H1 (cell line): ENCODE measurements at regions of chr5 and their contacts with region 1.

Region 1: DNA sequence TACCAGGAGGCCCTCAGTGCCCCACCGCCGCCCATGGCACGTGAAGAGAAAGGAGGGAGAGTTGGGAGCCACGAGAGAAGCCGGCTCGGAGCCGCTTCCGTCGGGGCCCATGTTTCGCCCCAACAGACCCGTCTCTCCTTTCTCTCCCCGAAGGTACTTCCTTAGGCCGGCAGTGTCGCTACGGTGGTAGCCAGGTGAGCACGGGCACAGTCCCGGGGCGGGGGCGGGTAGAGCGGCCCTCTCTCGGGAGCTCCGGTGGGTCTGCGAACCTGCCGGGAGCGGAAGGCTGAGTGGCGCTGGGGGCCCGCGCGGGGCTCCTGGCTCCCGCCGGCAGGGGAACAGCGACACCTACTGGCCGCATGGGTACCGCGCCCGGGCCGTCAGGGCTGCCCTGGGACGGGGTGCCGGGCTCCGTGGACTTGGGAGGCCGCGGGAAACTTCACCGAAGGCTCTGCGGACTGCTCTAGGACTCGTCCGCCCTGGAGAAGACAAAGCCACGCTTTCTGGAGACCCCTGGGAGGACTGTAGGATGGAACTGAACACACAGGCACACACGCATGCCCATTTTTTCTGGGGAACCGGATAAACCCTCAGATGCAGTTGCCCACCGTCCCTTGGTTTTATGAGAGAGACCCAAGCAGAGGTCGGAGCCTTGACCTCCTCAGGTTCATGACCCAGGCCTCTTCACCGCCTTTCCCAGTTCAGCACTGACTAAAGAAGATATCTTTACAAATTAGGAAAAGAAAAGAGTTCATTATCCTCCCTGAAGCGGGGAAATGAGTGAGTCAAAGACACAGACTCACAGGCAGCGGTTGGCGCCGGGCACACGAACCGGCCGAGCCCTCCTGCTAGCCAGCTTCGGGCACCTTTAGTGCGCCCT is 202.5 kb downstream of the MEF2C start:
- DNase-seq: peak in 1 of 2 experiments; percentile 97
- H3K4me3 ChIP-seq: peak overlapping the region; percentile 6 to 58 (median 31); a peak in 7 of 8 replicates
- H3K27ac ChIP-seq: no peak overlapping the region
- H3K4me1 ChIP-seq: peaks cover 10 to 26% (median 15%) of the 10 kb centered on the region in 4 experiments
- H3K27me3 ChIP-seq: peaks cover 58 to 96% (median 81%) of the 10 kb centered on the region in 4 experiments
- CTCF ChIP-seq: peak; percentile 76 to 93 (median 88)
- EP300 ChIP-seq: no peak
- POLR2A ChIP-seq: no peak
- RAD21 ChIP-seq: peak; percentile 93 to 94

Region 2: DNA sequence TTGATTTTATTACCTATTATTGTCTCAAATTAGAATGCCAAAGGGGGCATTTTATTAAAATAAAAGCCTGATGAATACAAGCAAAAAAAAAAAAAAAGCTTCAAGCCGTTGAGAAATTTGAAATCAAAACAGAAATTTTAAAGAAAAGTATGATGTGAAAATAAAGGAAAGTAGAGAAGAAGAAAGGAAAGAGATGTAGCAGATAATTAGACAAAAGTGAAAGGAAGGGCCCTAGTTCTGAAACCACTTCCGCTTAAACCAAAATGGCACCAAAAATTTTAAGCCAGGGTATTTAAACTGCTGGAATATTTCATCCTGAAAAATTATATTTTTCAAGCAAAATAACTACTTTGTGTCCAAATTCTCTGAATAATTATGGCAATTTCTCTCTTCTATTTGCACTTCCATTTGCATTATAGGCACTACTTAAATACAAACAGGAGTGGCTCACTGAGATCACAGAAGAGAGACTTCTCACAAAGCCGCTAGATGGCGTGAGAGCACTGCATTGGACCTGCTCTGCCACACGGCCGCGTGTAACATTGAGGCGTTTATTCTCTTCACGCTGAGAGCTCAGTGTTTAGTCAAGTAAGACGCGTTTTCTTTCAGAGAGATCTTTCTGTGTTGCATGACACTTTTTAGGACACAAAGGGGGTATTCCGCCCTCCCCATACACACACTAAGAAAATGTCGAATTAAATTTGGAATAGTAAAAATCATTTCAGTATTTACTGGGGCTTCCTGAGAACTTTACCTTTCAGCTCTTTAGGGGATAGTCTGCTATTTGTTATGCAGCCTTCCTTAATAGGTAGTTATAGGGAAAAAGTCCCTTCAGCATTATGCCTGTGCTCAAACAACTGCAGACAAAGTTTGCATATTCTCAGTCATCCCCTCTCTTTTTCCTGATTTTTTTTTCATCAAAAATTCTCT is 899.4 kb before region 1 on chr5:
- CTCF ChIA-PET with region 1: interaction called, 43 read pairs
- POLR2A ChIA-PET with region 1: no interaction called
- DNase-seq: peak; percentile 57 to 77
- H3K4me3 ChIP-seq: peak overlapping the region in 1 of 4 experiments; percentile 47; a peak in 3 of 8 replicates
- H3K27ac ChIP-seq: no peak overlapping the region
- H3K4me1 ChIP-seq: no peaks in the 10 kb centered on the region; a peak in 1 of 7 replicates
- H3K27me3 ChIP-seq: peaks cover 2 to 9% (median 4%) of the 10 kb centered on the region in 4 experiments; a peak in 4 of 7 replicates
- CTCF ChIP-seq: peak; percentile 74 to 88 (median 86)
- EP300 ChIP-seq: no peak
- POLR2A ChIP-seq: no peak
- RAD21 ChIP-seq: peak; percentile 99

Region 3: GRCh38 chr5:88583471-88583870 is 97.0 kb before region 1 on chr5:
- CTCF ChIA-PET with region 1: no interaction called
- POLR2A ChIA-PET with region 1: no interaction called
- DNase-seq: no peak
- H3K4me3 ChIP-seq: no peak overlapping the region
- H3K27ac ChIP-seq: no peak overlapping the region
- H3K4me1 ChIP-seq: no peaks in the 10 kb centered on the region
- H3K27me3 ChIP-seq: no peaks in the 10 kb centered on the region
- CTCF ChIP-seq: no peak
- EP300 ChIP-seq: no peak
- POLR2A ChIP-seq: no peak
- RAD21 ChIP-seq: no peak

Region 4: DNA sequence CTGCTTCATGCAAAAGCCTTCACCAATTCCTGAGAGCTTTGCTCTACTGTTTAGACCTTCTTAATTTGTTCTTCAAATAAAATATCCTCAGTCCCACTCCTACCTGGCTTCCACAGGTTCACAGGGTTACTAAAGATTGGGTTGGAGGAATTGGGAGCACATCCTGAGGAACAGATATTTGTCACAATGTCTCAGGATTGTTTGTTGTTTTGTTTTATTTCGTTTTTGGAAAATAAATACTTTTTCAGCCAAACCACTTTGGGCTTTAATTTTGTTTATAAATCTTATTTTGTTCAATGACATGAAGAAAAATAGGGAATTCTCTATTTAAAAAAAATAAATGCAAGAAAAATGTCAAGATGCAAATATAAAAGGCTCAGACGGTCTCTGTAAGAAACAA is 46.5 kb before region 1 on chr5:
- CTCF ChIA-PET with region 1: no interaction called
- POLR2A ChIA-PET with region 1: no interaction called
- DNase-seq: no peak
- H3K4me3 ChIP-seq: no peak overlapping the region
- H3K27ac ChIP-seq: no peak overlapping the region
- H3K4me1 ChIP-seq: no peaks in the 10 kb centered on the region
- H3K27me3 ChIP-seq: no peaks in the 10 kb centered on the region
- CTCF ChIP-seq: no peak
- EP300 ChIP-seq: no peak
- POLR2A ChIP-seq: no peak
- RAD21 ChIP-seq: no peak

Region 5: DNA sequence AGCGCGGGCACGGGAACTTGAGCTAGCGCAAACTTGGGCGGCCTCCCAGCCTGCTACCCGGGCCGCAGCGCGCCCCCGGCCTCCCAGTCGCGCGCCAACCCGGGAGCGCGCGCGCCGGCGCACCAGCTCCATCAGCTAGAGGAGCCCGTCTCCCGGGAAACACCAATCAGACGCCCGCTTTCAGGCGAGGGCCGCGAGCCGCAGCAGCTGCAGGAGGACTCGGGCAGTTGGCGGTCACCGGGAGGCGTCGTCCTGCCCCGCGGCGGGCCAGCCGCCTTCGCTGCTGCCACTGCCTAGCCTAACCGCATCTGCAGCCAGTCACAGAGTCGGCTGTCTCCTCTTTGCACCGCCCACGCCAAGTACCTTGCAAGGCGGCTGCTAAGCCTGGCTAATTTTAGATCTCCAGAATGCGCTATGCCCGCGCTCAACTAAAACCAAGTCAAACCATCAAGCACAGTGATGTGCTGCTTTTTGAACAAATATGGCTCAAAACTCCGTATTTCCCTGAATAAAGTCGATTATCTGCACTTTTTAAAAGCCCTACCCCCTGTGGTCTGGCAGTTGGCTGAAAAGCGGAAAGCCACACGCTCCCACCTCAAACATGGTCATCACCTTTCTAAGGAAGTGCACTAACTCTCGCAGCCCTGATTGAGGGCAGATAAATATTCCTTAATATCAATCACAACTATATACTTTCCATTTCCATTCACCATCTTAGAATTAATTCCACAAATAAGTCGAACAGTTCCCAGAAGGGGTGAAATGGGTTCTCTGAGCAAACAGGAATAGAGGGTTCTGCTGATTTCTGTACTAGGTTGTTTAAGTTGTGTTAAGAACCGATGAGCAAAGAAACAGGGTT is 19.3 kb before region 1 on chr5:
- CTCF ChIA-PET with region 1: interaction called, 24 read pairs
- POLR2A ChIA-PET with region 1: interaction called, 25 read pairs
- DNase-seq: peak in 1 of 2 experiments; percentile 92
- H3K4me3 ChIP-seq: peak overlapping the region; percentile 29 to 60 (median 34); a peak in 7 of 8 replicates
- H3K27ac ChIP-seq: no peak overlapping the region
- H3K4me1 ChIP-seq: peaks cover 10 to 26% (median 13%) of the 10 kb centered on the region in 4 experiments; a peak in 6 of 7 replicates
- H3K27me3 ChIP-seq: peaks cover 25 to 80% (median 47%) of the 10 kb centered on the region in 4 experiments
- CTCF ChIP-seq: no peak
- EP300 ChIP-seq: no peak
- POLR2A ChIP-seq: no peak
- RAD21 ChIP-seq: no peak; a peak in 2 of 4 replicates

Region 6: GRCh38 chr5:88666761-88667495 is 13.6 kb before region 1 on chr5:
- CTCF ChIA-PET with region 1: interaction called, 24 read pairs
- POLR2A ChIA-PET with region 1: interaction called, 25 read pairs
- DNase-seq: no peak
- H3K4me3 ChIP-seq: peak overlapping the region in 3 of 4 experiments; percentile 4 to 50 (median 17); a peak in 5 of 8 replicates
- H3K27ac ChIP-seq: no peak overlapping the region
- H3K4me1 ChIP-seq: peaks cover 10 to 30% (median 21%) of the 10 kb centered on the region in 4 experiments
- H3K27me3 ChIP-seq: peaks cover 42 to 83% (median 62%) of the 10 kb centered on the region in 4 experiments
- CTCF ChIP-seq: no peak
- EP300 ChIP-seq: peak in 1 of 2 experiments; percentile 72; a peak in 1 of 3 replicates
- POLR2A ChIP-seq: no peak
- RAD21 ChIP-seq: no peak